Activated CD4-positive, alpha-beta T cell treated with anti-CD3 and anti-CD28 coated beads for 36 hours (primary cell): ENCODE measurements at regions of chr20 and their contacts with region 1.

Region 1: DNA sequence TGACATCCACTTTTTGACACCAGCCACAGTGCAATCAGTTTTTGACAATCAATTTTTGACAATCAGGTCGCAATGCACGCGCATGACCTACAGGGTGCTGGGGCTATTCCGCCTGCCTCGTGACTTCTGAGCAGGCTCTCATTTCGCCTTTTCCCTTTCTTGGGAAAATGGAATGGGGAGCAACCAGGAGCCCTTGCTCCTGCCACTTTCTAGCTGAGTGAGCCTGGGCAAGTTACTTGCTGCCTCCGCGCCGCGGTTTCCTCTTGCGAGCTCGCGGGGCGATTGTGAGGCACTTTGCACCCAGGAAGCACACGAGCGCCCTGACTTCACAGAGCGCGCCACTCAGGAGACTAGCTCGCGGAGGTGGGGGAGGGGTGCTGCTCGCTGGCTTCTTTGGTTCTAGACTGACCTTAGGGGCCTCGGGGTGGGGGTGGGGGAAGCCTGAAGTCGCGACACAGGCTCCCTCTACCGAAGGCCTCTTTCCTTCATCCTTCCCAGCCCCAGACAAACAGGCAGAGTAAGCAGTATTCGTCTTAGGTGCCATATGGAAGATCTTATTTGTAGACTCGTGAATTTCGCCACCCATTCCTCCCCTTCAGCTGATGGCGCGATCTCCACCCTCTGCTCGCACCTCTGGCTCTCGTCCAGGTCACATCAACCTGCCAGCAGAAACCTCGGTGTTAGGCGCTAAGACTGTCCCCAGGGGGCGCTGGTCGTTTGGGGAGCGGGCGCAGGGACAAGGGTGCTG is 4.6 kb downstream of the TP53TG5 start:
- DNase-seq: peak; percentile 96
- ATAC-seq: peak; percentile 97
- H3K4me3 Mint-ChIP-seq: peak overlapping the region; percentile 75
- H3K27ac Mint-ChIP-seq: peak overlapping the region; percentile 91
- H3K4me1 Mint-ChIP-seq: peaks cover 29% of the 10 kb centered on the region
- H3K27me3 Mint-ChIP-seq: no peaks in the 10 kb centered on the region

Region 2: GRCh38 chr20:45387274-45387673 is 13.7 kb after region 1 on chr20:
- CTCF ChIA-PET with region 1: interaction called, 19 read pairs
- POLR2A ChIA-PET with region 1: no interaction called
- intact Hi-C with region 1: no loop called
- DNase-seq: no peak
- ATAC-seq: no peak
- H3K4me3 Mint-ChIP-seq: no peak overlapping the region
- H3K27ac Mint-ChIP-seq: no peak overlapping the region
- H3K4me1 Mint-ChIP-seq: peaks cover 15% of the 10 kb centered on the region
- H3K27me3 Mint-ChIP-seq: no peaks in the 10 kb centered on the region

Region 3: GRCh38 chr20:45406259-45407066 is 32.9 kb after region 1 on chr20:
- CTCF ChIA-PET with region 1: interaction called, 32 read pairs
- POLR2A ChIA-PET with region 1: no interaction called
- intact Hi-C with region 1: loop called in 1 of 2 experiments (anchors 1 kb)
- DNase-seq: peak; percentile 69
- ATAC-seq: peak; percentile 51
- H3K4me3 Mint-ChIP-seq: peak overlapping the region; percentile 73
- H3K27ac Mint-ChIP-seq: peak overlapping the region; percentile 69
- H3K4me1 Mint-ChIP-seq: peaks cover 22% of the 10 kb centered on the region
- H3K27me3 Mint-ChIP-seq: peaks cover 3% of the 10 kb centered on the region

Region 4: GRCh38 chr20:45427236-45428149 is 54.0 kb after region 1 on chr20:
- CTCF ChIA-PET with region 1: interaction called, 11 read pairs
- POLR2A ChIA-PET with region 1: interaction called, 3 read pairs
- intact Hi-C with region 1: no loop called
- DNase-seq: no peak
- ATAC-seq: no peak
- H3K4me3 Mint-ChIP-seq: no peak overlapping the region
- H3K27ac Mint-ChIP-seq: no peak overlapping the region
- H3K4me1 Mint-ChIP-seq: peaks cover 5% of the 10 kb centered on the region
- H3K27me3 Mint-ChIP-seq: no peaks in the 10 kb centered on the region

Region 5: GRCh38 chr20:45450097-45450818 is 76.7 kb after region 1 on chr20:
- CTCF ChIA-PET with region 1: interaction called, 30 read pairs
- POLR2A ChIA-PET with region 1: interaction called, 3 read pairs
- intact Hi-C with region 1: loop called in 1 of 2 experiments (anchors 1 kb)
- DNase-seq: peak; percentile 24
- ATAC-seq: peak; percentile 53
- H3K4me3 Mint-ChIP-seq: no peak overlapping the region
- H3K27ac Mint-ChIP-seq: no peak overlapping the region
- H3K4me1 Mint-ChIP-seq: peaks cover 2% of the 10 kb centered on the region
- H3K27me3 Mint-ChIP-seq: peaks cover 4% of the 10 kb centered on the region